Activated T-helper 1 cell treated with anti-CD3 and anti-CD28 coated beads, Interleukin-12 subunit alpha, Interleukin-12 subunit beta, Interleukin-2, Interleukin-4 antibody, amounts not matched to agents 30 ng/mL and 10 ng/mL and 1 ng/mL, durations not matched to agents 14 hours and 24 hours and 36 hours (primary cell): ENCODE measurements at regions of chr5 and their contacts with region 1.

Region 1: GRCh38 chr5:69369369-69370121 is at the starts of genes AK6, RAD17 and TAF9:
- DNase-seq: peak; percentile 87
- H3K4me3 Mint-ChIP-seq: peak within 1 kb of the TSS; percentile 98
- H3K27ac Mint-ChIP-seq: peak within 1 kb of the TSS; percentile 98
- H3K4me1 Mint-ChIP-seq: peaks cover 36% of the 10 kb centered on the region
- H3K27me3 Mint-ChIP-seq: no peaks in the 10 kb centered on the region
- total RNA-seq, gene AK6: 59.0 and 62.3 TPM in 2 replicates
- total RNA-seq, gene RAD17: 22.0 and 26.9 TPM in 2 replicates
- total RNA-seq, gene TAF9: 60.0 and 65.0 TPM in 2 replicates

Region 2: GRCh38 chr5:69007726-69008368 is 361.7 kb before region 1 on chr5:
- intact Hi-C with region 1: no loop called
- DNase-seq: peak; percentile 49
- H3K4me3 Mint-ChIP-seq: no peak overlapping the region
- H3K27ac Mint-ChIP-seq: no peak overlapping the region
- H3K4me1 Mint-ChIP-seq: no peaks in the 10 kb centered on the region
- H3K27me3 Mint-ChIP-seq: peaks cover 16% of the 10 kb centered on the region

Region 3: GRCh38 chr5:69042915-69043658 is 326.5 kb before region 1 on chr5:
- intact Hi-C with region 1: loop called (anchors 2 kb)
- DNase-seq: peak; percentile 75
- H3K4me3 Mint-ChIP-seq: peak overlapping the region; percentile 84
- H3K27ac Mint-ChIP-seq: peak overlapping the region; percentile 56
- H3K4me1 Mint-ChIP-seq: peaks cover 5% of the 10 kb centered on the region
- H3K27me3 Mint-ChIP-seq: peaks cover 3% of the 10 kb centered on the region

Region 4: GRCh38 chr5:69189162-69190086 is 180.1 kb before region 1 on chr5 and contains the start of gene CENPH:
- intact Hi-C with region 1: loop called (anchors 1 kb)
- DNase-seq: peak; percentile 92
- H3K4me3 Mint-ChIP-seq: peak within 1 kb of the TSS; percentile 94
- H3K27ac Mint-ChIP-seq: peak within 1 kb of the TSS; percentile 98
- H3K4me1 Mint-ChIP-seq: peaks cover 16% of the 10 kb centered on the region
- H3K27me3 Mint-ChIP-seq: no peaks in the 10 kb centered on the region
- total RNA-seq, gene CENPH: 32.3 and 35.5 TPM in 2 replicates

Region 5: DNA sequence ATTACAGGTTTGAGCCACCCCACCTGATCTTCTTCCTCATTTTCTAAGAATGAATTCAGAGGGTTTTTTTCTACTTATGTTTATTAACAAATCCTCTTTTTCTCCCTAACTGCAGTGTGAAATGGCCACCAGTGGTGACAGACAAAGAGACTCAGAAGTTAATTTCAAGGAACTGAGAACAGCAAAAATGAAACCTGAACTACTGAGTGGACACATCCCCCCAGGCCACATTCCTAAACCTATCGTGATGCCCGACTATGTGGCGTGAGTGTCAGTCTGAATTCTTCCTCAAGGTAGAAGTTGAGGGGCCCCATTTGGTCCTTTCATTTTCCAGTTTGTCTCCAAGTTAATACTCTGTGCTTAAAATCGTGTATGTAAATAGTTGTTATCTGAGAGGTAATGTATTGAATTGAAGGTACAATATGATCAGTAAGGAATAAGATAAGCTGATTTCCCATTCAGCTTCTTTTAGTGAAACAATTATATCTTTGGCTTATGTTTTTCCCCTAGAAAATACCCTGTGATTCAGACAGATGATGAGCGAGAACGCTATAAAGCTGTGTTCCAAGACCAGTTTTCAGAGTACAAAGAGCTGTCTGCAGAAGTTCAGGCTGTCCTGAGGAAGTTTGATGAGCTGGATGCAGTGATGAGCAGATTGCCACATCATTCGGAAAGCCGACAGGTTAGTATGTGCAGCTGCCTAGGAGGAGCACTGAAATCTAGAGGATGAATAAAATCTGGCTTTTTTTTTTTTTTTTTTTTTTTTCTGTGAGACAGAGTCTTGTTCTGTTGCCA is 63.1 kb after region 1 on chr5:
- intact Hi-C with region 1: no loop called
- DNase-seq: no peak
- H3K4me3 Mint-ChIP-seq: no peak overlapping the region
- H3K27ac Mint-ChIP-seq: no peak overlapping the region
- H3K4me1 Mint-ChIP-seq: no peaks in the 10 kb centered on the region
- H3K27me3 Mint-ChIP-seq: peaks cover 2% of the 10 kb centered on the region